Cardiac septum (tissue), 1 donor: ENCODE measurements at regions of chr17 and their contacts with region 1.

Region 1: DNA sequence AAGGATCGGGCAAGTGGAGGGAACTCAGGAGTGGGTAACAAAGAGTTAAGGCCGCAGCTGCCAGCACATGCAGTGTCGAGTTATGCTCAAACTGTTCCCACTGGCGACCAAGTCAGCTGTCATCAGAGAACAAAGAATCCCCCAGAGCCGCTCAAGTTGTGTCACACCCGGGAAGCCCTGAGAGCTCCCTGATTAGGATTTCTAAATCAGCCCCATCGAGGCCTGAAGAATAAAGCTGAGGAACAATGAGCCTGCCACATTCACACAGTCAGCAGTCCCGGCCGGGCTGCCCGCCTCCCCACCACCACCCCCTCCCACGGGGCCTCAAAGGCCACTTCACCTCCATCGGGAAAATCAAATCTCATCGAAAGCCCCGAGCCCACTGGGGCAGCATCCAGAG is 84.5 kb downstream of the SOX9 start:
- DNase-seq: no peak

Region 2: DNA sequence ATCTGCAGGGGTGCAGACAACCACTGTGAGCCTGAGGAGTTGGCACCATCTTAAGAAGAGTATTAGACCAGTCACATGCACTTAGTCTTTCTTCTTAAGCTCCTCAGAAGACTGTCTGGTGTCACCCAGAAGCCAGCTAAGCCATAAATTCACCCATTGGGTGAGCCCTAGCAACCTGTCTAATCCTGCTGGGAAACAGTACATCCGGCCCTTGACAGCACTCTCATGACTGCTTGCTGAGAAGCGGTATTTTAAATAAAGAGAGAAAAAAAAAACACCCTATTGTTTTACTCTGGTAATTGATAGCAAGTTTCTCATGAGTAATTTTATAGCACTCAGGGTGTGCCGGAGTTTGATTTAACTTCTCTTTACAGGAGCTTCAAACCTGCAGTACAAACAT is 50.1 kb after region 1 on chr17:
- intact Hi-C with region 1: loop called (anchors 5 kb)
- DNase-seq: no peak